Activated T-helper 1 cell treated with anti-CD3 and anti-CD28 coated beads, Interleukin-12 subunit alpha, Interleukin-12 subunit beta, Interleukin-2, Interleukin-4 antibody, amounts not matched to agents 30 ng/mL and 10 ng/mL and 1 ng/mL, durations not matched to agents 14 hours and 24 hours and 36 hours (primary cell): ENCODE measurements at regions of chr7 and their contacts with region 1.

Region 1: DNA sequence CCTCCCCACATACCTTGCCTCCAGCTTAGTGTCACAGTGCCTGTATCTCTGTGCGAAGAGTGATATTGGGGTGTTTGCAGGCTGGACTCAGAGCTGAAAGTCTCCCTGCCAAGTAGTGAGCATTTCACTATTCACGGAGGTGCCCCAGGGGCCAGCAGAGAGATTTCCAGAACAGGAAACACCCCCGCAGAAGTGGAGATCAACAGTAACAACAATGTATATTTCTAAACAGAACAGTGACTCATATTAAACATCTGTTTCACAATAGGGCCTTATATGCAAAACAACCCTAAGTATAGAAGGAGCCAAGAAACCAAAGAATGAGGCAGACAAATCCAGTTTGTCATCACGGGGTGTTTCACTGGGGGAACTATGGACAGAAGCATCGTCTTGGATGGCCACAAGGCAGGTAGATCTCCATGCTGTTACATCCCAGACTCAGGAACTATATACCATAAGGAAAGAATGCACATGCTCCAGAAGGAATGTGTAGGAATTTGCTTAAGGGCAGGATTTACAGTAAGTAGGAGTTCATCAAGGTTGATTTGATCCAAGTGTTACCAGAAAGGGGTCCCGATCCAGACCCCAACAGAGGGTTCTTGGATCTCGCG is 29.3 kb upstream of the CCL24 start:
- DNase-seq: peak; percentile 1
- H3K4me3 Mint-ChIP-seq: peak overlapping the region; percentile 76
- H3K27ac Mint-ChIP-seq: peak overlapping the region; percentile 92
- H3K4me1 Mint-ChIP-seq: peaks cover 17% of the 10 kb centered on the region
- H3K27me3 Mint-ChIP-seq: no peaks in the 10 kb centered on the region

Region 2: GRCh38 chr7:75599244-75599781 is 243.6 kb before region 1 on chr7:
- intact Hi-C with region 1: loop called (anchors 2 kb)
- DNase-seq: no peak
- H3K4me3 Mint-ChIP-seq: no peak overlapping the region
- H3K27ac Mint-ChIP-seq: no peak overlapping the region
- H3K4me1 Mint-ChIP-seq: peaks cover 11% of the 10 kb centered on the region
- H3K27me3 Mint-ChIP-seq: peaks cover 1% of the 10 kb centered on the region

Region 3: GRCh38 chr7:75776295-75776971 is 66.5 kb before region 1 on chr7:
- intact Hi-C with region 1: loop called (anchors 1 kb)
- DNase-seq: peak; percentile 24
- H3K4me3 Mint-ChIP-seq: peak overlapping the region; percentile 26
- H3K27ac Mint-ChIP-seq: peak overlapping the region; percentile 83
- H3K4me1 Mint-ChIP-seq: peaks cover 31% of the 10 kb centered on the region
- H3K27me3 Mint-ChIP-seq: peaks cover 2% of the 10 kb centered on the region

Region 4: GRCh38 chr7:75808106-75808505 is 34.8 kb before region 1 on chr7:
- intact Hi-C with region 1: no loop called
- DNase-seq: no peak
- H3K4me3 Mint-ChIP-seq: no peak overlapping the region
- H3K27ac Mint-ChIP-seq: no peak overlapping the region
- H3K4me1 Mint-ChIP-seq: no peaks in the 10 kb centered on the region
- H3K27me3 Mint-ChIP-seq: no peaks in the 10 kb centered on the region

Region 5: GRCh38 chr7:75866489-75867389 is 23.8 kb after region 1 on chr7:
- intact Hi-C with region 1: loop called (anchors 2 kb)
- DNase-seq: no peak
- H3K4me3 Mint-ChIP-seq: no peak overlapping the region
- H3K27ac Mint-ChIP-seq: no peak overlapping the region
- H3K4me1 Mint-ChIP-seq: peaks cover 24% of the 10 kb centered on the region
- H3K27me3 Mint-ChIP-seq: peaks cover 8% of the 10 kb centered on the region

Region 6: GRCh38 chr7:75914730-75915585 is 72.0 kb after region 1 on chr7 and contains the start of gene POR:
- intact Hi-C with region 1: loop called (anchors 2 kb)
- DNase-seq: peak; percentile 97
- H3K4me3 Mint-ChIP-seq: peak within 1 kb of the TSS; percentile 91
- H3K27ac Mint-ChIP-seq: peak within 1 kb of the TSS; percentile 86
- H3K4me1 Mint-ChIP-seq: peaks cover 35% of the 10 kb centered on the region
- H3K27me3 Mint-ChIP-seq: peaks cover 3% of the 10 kb centered on the region
- total RNA-seq, gene POR: 84.4 and 91.2 TPM in 2 replicates

Region 7: GRCh38 chr7:76008156-76008687 is 165.3 kb after region 1 on chr7:
- intact Hi-C with region 1: loop called (anchors 1 kb)
- DNase-seq: peak; percentile 24
- H3K4me3 Mint-ChIP-seq: peak overlapping the region; percentile 52
- H3K27ac Mint-ChIP-seq: peak overlapping the region; percentile 94
- H3K4me1 Mint-ChIP-seq: peaks cover 35% of the 10 kb centered on the region
- H3K27me3 Mint-ChIP-seq: peaks cover 5% of the 10 kb centered on the region